ENCODE measurements at regions of chr13 and their contacts with region 1.

Region 1: GRCh38 chr13:110225609-110226562 is 81.1 kb downstream of the COL4A1 start:
- DNase-seq: no peak
- H3K4me3 ChIP-seq: no peak overlapping the region
- CTCF ChIP-seq: no peak
- POLR2A ChIP-seq: no peak

Region 2: DNA sequence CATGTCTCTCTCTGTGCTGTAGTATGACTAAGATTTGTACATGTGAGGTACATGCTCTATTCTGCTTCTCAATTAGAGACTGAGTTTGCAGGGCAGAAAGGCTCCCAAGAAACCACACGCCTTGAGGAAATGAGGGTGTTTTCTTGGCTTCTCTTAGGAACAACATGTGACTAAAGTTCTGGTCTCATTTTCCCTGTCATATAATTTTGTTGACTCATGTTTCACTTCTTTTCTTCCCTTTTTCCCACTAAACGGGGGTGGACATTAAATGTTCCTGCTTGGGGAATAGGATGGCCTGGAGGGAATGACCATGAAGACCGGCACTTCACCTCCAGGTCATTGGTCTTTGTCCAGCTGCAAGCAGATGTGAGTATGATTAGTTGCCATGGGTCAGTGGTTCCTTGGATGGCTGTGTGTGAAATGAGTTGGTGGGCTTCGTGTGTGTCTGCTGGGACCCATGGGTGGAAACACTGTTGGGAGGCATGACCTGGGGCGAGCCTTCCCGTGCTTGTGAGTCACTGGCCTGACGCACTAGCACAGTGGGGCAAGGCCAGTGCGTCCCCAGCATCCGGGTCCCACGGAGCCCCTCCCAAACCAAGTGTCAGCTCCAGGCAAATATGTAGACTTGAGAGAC is 24.5 kb after region 1 on chr13:
- intact Hi-C with region 1: no loop called
- DNase-seq: peak; percentile 58 to 90
- H3K4me3 ChIP-seq: no peak overlapping the region
- CTCF ChIP-seq: no peak
- POLR2A ChIP-seq: no peak

Region 3: DNA sequence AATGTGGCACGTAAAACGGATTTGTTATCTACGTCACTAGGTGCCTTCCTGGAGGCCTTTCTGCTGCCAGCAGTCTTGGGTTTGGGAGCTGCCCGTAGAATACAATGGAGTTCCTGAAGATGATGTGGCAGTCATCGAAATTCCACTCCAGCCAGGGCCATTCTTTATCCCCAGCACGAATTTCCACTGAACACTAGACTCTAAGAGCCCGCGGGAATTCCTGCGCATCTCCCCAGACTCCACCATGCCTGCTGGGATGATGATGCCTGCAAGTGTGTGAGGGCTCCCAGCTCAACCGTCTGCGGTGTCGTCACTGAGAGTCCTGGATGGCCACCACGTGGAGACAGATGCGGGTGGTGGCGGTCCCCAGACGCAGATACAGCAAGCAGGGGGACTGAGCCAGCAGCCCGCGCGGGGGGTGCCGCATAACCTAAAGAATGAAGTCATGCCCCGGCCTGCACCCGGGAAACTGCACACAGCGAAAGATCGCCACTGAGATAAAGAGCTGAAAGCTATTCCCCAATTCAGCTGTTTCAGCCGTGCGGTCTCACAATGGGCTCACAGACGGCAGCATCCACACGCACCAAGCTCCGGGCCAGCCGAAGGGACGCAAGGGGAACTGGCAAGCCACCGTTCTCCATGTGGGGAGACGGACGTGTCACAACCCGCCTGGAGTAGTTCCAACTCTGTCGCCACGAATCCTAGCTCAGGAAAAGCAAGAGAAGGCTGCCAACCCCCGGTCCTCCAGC is 40.0 kb after region 1 on chr13:
- intact Hi-C with region 1: no loop called
- DNase-seq: peak in 1 of 2 donors; percentile 91
- H3K4me3 ChIP-seq: no peak overlapping the region
- CTCF ChIP-seq: no peak
- POLR2A ChIP-seq: no peak

Region 4: DNA sequence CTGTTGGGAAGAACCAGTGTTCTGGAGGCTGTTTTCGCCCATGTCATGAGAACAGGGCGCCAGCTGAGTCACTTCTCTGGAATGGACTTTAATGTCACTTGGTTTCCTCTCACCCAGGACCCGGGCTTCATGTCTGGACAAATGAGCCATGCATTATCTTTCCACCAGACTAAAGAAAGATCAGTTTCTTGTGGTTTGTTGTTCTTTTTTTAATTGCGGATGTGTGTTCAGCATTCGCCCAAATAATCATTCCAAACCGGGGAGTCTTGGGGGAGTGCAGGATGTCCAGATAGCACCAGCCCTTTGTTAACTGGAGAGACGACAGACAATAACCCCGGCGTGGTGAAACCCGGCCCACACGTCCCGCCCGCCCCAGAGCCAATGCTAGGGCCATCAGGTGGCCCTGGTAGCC is 183.7 kb after region 1 on chr13:
- intact Hi-C with region 1: loop called (anchors 5 kb)
- DNase-seq: no peak
- H3K4me3 ChIP-seq: no peak overlapping the region
- CTCF ChIP-seq: no peak
- POLR2A ChIP-seq: no peak

Region 5: DNA sequence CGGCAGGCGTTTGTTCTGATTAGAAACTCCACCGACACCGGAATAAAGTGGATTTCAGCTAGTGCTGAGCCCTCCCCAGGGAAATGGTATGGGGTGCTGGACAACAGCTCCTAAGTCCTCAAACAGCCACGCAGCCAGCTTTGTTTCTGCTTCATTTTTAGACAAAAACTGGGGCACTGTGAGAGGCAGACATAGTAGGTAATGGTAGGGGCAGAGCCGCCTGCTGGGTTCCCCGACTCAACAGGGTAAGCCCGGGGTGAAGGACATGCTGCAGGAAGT is 440.3 kb after region 1 on chr13:
- intact Hi-C with region 1: no loop called
- DNase-seq: peak in 1 of 2 donors; percentile 43
- H3K4me3 ChIP-seq: no peak overlapping the region
- CTCF ChIP-seq: no peak
- POLR2A ChIP-seq: no peak

Region 6: GRCh38 chr13:111610081-111610480 is 1384.2 kb after region 1 on chr13:
- intact Hi-C with region 1: loop called (anchors 5 kb)
- DNase-seq: no peak
- H3K4me3 ChIP-seq: no peak overlapping the region
- CTCF ChIP-seq: no peak
- POLR2A ChIP-seq: no peak

Measured in lower leg skin (tissue), 4 donors.